Mammary epithelial cell (primary cell): ENCODE measurements at regions of chr7 and their contacts with region 1.

Region 1: DNA sequence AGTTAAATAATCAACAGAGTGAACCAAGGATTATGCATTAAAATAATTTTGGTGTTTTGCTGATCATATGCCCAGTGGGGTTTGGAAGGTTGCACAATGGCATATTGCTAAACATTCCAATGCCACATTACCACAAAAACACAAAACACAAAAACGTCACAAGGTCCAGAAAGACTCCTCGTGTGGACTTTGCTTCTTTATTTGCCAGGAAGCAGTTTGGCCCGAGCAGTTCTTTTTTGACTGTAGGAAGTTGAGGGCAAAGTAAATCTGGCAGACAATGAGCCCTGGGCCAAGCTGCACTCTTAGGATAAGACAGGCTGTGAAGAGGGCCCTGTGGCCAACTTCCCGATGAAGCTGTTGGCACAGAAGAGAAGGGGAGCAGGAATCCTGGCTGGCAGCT is 39.2 kb upstream of the SLC35B4 start:
- DNase-seq: peak; percentile 16
- H3K4me3 ChIP-seq: no peak overlapping the region
- H3K27ac ChIP-seq: no peak overlapping the region
- H3K4me1 ChIP-seq: peaks cover 6% of the 10 kb centered on the region
- H3K27me3 ChIP-seq: no peaks in the 10 kb centered on the region
- CTCF ChIP-seq: no peak

Region 2: DNA sequence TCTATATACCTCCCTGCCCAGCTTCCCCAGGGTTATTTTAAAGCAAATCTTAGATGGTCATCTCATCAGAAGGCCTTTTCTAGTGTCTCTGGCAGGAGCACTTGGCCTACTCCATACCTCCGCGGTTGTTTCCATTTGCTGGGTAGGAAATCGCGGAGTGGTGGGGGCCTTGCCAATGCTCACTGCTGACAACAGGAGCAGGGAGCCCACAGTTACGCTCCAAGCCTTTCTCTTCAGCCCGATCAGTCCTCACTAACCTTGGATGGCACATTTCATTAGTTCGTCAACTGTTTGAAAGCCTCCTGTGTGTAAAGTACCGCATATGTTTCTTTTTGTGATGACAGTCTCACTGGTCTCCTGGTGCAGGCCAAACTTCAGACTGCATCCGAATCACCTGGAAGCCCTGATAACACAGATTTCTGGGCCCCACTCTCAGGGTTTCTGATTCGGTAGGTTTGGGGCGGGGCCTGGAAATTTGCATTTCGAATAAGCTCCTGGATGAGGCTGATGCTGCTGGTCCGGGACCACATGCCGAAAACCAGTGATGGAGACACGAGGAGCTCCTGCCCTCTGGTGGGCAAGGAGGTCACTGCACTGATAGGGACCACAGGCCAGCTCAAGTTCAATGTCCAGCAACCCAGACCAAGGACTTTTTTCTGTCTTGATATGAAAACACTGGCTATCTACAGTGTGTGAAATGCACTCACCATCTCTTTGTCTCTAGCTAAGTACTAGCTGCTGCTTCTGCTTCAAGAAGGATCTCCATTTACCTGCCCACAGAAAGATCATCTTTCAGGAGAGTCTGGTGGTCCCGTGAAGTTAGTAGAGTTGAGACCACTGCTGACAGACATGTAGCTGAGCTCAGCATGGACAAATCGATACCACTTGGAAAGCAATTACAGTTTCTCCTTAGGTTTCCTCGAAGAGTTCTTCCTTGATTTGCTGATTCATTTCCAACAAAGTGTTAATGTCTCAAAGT is 214.7 kb before region 1 on chr7:
- CTCF ChIA-PET with region 1: no interaction called
- dilution Hi-C with region 1: no loop called
- in situ Hi-C with region 1: no loop called
- intact Hi-C with region 1: loop called (anchors 1 kb)
- DNase-seq: peak; percentile 32
- H3K4me3 ChIP-seq: no peak overlapping the region
- H3K27ac ChIP-seq: no peak overlapping the region
- H3K4me1 ChIP-seq: no peaks in the 10 kb centered on the region
- H3K27me3 ChIP-seq: no peaks in the 10 kb centered on the region
- CTCF ChIP-seq: peak; percentile 86 to 95

Region 3: DNA sequence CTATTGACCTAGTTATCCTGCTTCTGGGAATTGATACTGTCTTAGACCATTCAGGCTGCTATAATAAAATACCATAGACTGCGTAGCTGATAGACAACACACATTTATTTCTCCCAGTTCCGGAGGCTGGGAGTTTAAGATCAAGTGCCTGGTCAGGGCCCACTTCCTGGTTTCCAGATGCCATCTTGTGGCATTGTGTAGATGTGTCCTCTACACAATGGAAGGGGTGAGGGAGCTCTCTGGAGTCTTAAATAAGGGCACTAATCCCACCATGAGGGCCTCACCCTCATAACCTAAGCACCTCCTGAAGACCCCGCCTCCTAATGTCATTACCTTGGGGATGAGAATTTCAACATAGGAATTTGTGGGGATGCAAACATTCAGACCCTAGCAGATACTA is 101.6 kb before region 1 on chr7:
- CTCF ChIA-PET with region 1: no interaction called
- dilution Hi-C with region 1: no loop called
- in situ Hi-C with region 1: no loop called
- intact Hi-C with region 1: loop called (anchors 10 kb)
- DNase-seq: no peak
- H3K4me3 ChIP-seq: no peak overlapping the region
- H3K27ac ChIP-seq: no peak overlapping the region
- H3K4me1 ChIP-seq: no peaks in the 10 kb centered on the region
- H3K27me3 ChIP-seq: no peaks in the 10 kb centered on the region
- CTCF ChIP-seq: peak; percentile 16 to 60

Region 4: GRCh38 chr7:134316539-134317344 is 39.2 kb before region 1 on chr7 and contains the start of gene SLC35B4:
- CTCF ChIA-PET with region 1: no interaction called
- dilution Hi-C with region 1: no loop called
- in situ Hi-C with region 1: no loop called
- intact Hi-C with region 1: loop called (anchors 2 kb)
- DNase-seq: peak; percentile 96
- H3K4me3 ChIP-seq: peak within 1 kb of the TSS; percentile 79 to 89 (median 88)
- H3K27ac ChIP-seq: peak within 1 kb of the TSS; percentile 59
- H3K4me1 ChIP-seq: peaks cover 14% of the 10 kb centered on the region
- H3K27me3 ChIP-seq: no peaks in the 10 kb centered on the region
- CTCF ChIP-seq: peak; percentile 7 to 35
- total RNA-seq, gene SLC35B4: 16.3 to 22.6 TPM